Activated T-helper 2 cell treated with anti-CD3 and anti-CD28 coated beads, Interferon-gamma antibody, Interleukin-2, Interleukin-4, amounts not matched to agents 10 μg/mL and 5 μg/mL and 100 μg/mL, durations not matched to agents 14 hours and 24 hours and 36 hours (primary cell): ENCODE measurements at regions of chr6 and their contacts with region 1.

Region 1: GRCh38 chr6:155126727-155127439 is 131.8 kb downstream of the TIAM2 start:
- DNase-seq: no peak
- H3K4me3 Mint-ChIP-seq: peak overlapping the region; percentile 39
- H3K27ac Mint-ChIP-seq: peak overlapping the region; percentile 99
- H3K4me1 Mint-ChIP-seq: peaks cover 47% of the 10 kb centered on the region
- H3K27me3 Mint-ChIP-seq: no peaks in the 10 kb centered on the region

Region 2: GRCh38 chr6:154329350-154330170 is 797.3 kb before region 1 on chr6:
- intact Hi-C with region 1: no loop called
- DNase-seq: no peak
- H3K4me3 Mint-ChIP-seq: no peak overlapping the region
- H3K27ac Mint-ChIP-seq: no peak overlapping the region
- H3K4me1 Mint-ChIP-seq: peaks cover 2% of the 10 kb centered on the region
- H3K27me3 Mint-ChIP-seq: peaks cover 6% of the 10 kb centered on the region

Region 3: GRCh38 chr6:154733012-154733625 is 393.8 kb before region 1 on chr6 and contains the start of gene SCAF8:
- intact Hi-C with region 1: loop called (anchors 10 kb)
- DNase-seq: peak; percentile 83
- H3K4me3 Mint-ChIP-seq: peak within 1 kb of the TSS; percentile 91
- H3K27ac Mint-ChIP-seq: peak within 1 kb of the TSS; percentile 98
- H3K4me1 Mint-ChIP-seq: peaks cover 24% of the 10 kb centered on the region
- H3K27me3 Mint-ChIP-seq: no peaks in the 10 kb centered on the region
- total RNA-seq, gene SCAF8: 35.4 and 37.3 TPM in 2 replicates

Region 4: GRCh38 chr6:155050311-155050710 is 76.6 kb before region 1 on chr6:
- intact Hi-C with region 1: loop called (anchors 1 kb)
- DNase-seq: peak; percentile 22
- H3K4me3 Mint-ChIP-seq: peak overlapping the region; percentile 66
- H3K27ac Mint-ChIP-seq: peak overlapping the region; percentile 96
- H3K4me1 Mint-ChIP-seq: peaks cover 30% of the 10 kb centered on the region
- H3K27me3 Mint-ChIP-seq: no peaks in the 10 kb centered on the region

Region 5: GRCh38 chr6:155100087-155100486 is 26.8 kb before region 1 on chr6:
- intact Hi-C with region 1: loop called (anchors 1 kb)
- DNase-seq: no peak
- H3K4me3 Mint-ChIP-seq: no peak overlapping the region
- H3K27ac Mint-ChIP-seq: no peak overlapping the region
- H3K4me1 Mint-ChIP-seq: peaks cover 34% of the 10 kb centered on the region
- H3K27me3 Mint-ChIP-seq: no peaks in the 10 kb centered on the region

Region 6: GRCh38 chr6:155154158-155154830 is 27.4 kb after region 1 on chr6:
- intact Hi-C with region 1: loop called (anchors 1 kb)
- DNase-seq: peak; percentile 35
- H3K4me3 Mint-ChIP-seq: peak overlapping the region; percentile 66
- H3K27ac Mint-ChIP-seq: peak overlapping the region; percentile 99
- H3K4me1 Mint-ChIP-seq: peaks cover 71% of the 10 kb centered on the region
- H3K27me3 Mint-ChIP-seq: no peaks in the 10 kb centered on the region

Region 7: DNA sequence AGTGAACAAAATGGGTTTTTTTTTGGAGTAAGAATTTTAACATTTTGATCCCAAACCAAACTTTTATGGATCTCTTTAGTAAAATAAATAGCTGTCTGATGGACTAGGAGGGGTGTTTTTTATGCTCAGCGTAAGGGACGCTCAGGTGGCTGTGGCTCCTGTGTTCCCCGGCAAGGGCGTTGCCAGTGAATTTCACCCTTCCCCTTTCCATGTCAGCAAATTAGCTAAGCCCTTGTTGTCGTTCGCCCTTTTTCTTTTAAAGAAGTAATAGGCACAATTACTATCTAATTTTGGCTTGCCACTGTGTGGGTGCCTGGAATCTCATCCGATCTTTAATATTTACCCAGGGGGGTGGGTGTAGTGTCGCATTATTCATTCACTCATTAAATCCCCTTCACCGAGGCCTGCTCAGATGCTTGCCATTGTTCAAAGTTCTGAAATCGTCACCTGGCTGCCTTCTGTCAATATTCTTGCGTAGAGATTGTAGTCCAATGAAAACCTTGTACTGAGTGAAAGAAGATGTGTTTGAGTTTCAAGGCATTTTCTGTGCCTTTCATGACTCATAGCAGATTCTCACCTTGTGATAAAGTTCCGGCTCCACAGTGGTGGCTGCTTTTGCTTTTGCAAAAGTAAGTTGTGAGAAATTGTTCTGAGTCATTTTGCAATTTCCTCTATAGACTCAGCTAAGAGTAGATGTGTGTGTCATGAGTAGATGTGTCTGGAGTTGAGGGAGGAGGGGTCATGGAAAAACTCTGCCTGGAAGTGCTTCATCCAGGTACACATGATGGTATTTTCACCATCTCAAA is 97.0 kb after region 1 on chr6:
- intact Hi-C with region 1: loop called (anchors 1 kb)
- DNase-seq: peak; percentile 56
- H3K4me3 Mint-ChIP-seq: peak overlapping the region; percentile 19
- H3K27ac Mint-ChIP-seq: peak overlapping the region; percentile 77
- H3K4me1 Mint-ChIP-seq: peaks cover 27% of the 10 kb centered on the region
- H3K27me3 Mint-ChIP-seq: no peaks in the 10 kb centered on the region